ENCODE measurements at regions of chr6 and their contacts with region 1.

Region 1: GRCh38 chr6:28136585-28137504 is 4.8 kb upstream of the ZKSCAN8 start:
- DNase-seq: peak; percentile 75
- H3K4me3 ChIP-seq: peak overlapping the region; percentile 61 to 78
- H3K27ac ChIP-seq: peak overlapping the region; percentile 87 to 92
- H3K4me1 ChIP-seq: peaks cover 4% of the 10 kb centered on the region
- H3K27me3 ChIP-seq: no peaks in the 10 kb centered on the region
- CTCF ChIP-seq: no peak
- POLR2A ChIP-seq: no peak

Region 2: GRCh38 chr6:28080631-28081485 is 56.0 kb before region 1 on chr6:
- intact Hi-C with region 1: loop called (anchors 2 kb)
- DNase-seq: peak; percentile 93
- H3K4me3 ChIP-seq: peak overlapping the region; percentile 49 to 53
- H3K27ac ChIP-seq: peak overlapping the region; percentile 78 to 79
- H3K4me1 ChIP-seq: no peaks in the 10 kb centered on the region
- H3K27me3 ChIP-seq: no peaks in the 10 kb centered on the region
- CTCF ChIP-seq: no peak
- POLR2A ChIP-seq: no peak

Region 3: GRCh38 chr6:28225056-28225834 is 88.4 kb after region 1 on chr6 and contains the start of gene ZSCAN9:
- intact Hi-C with region 1: loop called (anchors 5 kb)
- DNase-seq: peak; percentile 78
- H3K4me3 ChIP-seq: peak within 1 kb of the TSS; percentile 67 to 77
- H3K27ac ChIP-seq: peak within 1 kb of the TSS; percentile 78 to 81
- H3K4me1 ChIP-seq: no peaks in the 10 kb centered on the region
- H3K27me3 ChIP-seq: no peaks in the 10 kb centered on the region
- CTCF ChIP-seq: no peak
- POLR2A ChIP-seq: no peak
- total RNA-seq, gene ZSCAN9: 16.7 to 17.3 TPM

Region 4: GRCh38 chr6:28252009-28252975 is 115.4 kb after region 1 on chr6 and contains the start of gene ZKSCAN4:
- intact Hi-C with region 1: loop called (anchors 10 kb)
- DNase-seq: peak; percentile 66
- H3K4me3 ChIP-seq: peak within 1 kb of the TSS; percentile 66 to 67
- H3K27ac ChIP-seq: peak within 1 kb of the TSS; percentile 26 to 35
- H3K4me1 ChIP-seq: no peaks in the 10 kb centered on the region
- H3K27me3 ChIP-seq: no peaks in the 10 kb centered on the region
- CTCF ChIP-seq: no peak
- POLR2A ChIP-seq: no peak
- total RNA-seq, gene ZKSCAN4: 2.7 to 5.8 TPM

Region 5: GRCh38 chr6:28335564-28336283 is 198.9 kb after region 1 on chr6 and contains the start of gene ZSCAN31:
- intact Hi-C with region 1: loop called (anchors 5 kb)
- DNase-seq: peak; percentile 93
- H3K4me3 ChIP-seq: peak within 1 kb of the TSS; percentile 56 to 60
- H3K27ac ChIP-seq: peak within 1 kb of the TSS; percentile 97 to 99
- H3K4me1 ChIP-seq: no peaks in the 10 kb centered on the region
- H3K27me3 ChIP-seq: no peaks in the 10 kb centered on the region
- CTCF ChIP-seq: no peak
- POLR2A ChIP-seq: peak; percentile 52
- total RNA-seq, gene ZSCAN31: 13.7 to 21.7 TPM

Region 6: GRCh38 chr6:28349892-28350737 is 213.3 kb after region 1 on chr6 and contains the start of gene ZKSCAN3:
- intact Hi-C with region 1: loop called (anchors 5 kb)
- DNase-seq: peak; percentile 83
- H3K4me3 ChIP-seq: peak within 1 kb of the TSS; percentile 62 to 64
- H3K27ac ChIP-seq: peak within 1 kb of the TSS; percentile 60 to 67
- H3K4me1 ChIP-seq: peaks cover under 1% of the 10 kb centered on the region
- H3K27me3 ChIP-seq: no peaks in the 10 kb centered on the region
- CTCF ChIP-seq: no peak
- POLR2A ChIP-seq: no peak
- total RNA-seq, gene ZKSCAN3: 5.9 to 6.5 TPM